AG04450 (cell line): ENCODE measurements at regions of chr2 and their contacts with region 1.

Region 1: DNA sequence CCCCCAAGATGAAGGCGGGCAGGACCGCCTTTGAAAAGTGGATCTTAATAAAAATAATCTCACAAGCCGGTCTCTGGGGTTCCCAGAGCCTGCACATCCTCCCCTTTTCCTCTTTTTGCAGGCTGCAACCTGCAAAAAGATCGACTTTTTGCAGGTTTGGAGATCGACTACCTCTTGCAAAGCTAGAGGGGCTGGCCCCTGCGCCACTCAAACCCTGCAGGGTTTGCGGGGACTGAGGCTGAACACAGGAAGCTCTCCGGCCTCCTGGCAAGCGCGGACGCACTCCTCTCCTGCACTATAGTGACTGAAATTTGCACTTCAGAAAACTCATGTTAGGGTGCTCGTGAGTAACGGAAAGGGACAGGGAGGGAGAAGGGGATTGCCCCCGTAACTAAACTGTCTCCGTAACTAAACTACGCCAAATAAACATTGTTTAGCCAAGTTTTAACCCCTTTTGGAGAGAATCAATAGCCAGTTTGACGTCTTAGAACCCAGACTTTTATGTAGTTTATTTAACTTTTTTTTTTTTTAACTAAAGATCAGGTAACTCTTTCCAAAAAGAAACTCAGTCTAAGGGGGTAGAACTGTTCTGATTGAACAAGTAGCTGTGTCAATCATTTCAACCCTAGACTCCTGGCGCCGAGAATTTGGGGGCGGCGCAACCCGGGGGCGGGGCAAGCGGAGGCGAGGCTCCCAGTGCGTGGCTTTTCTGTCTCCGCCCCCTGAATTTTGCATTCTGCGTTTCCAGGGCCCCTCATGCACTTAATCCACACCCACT is 2.5 kb downstream of the IGFBP5 start:
- DNase-seq: no peak
- H3K4me3 ChIP-seq: peak overlapping the region; percentile 93
- H3K27ac ChIP-seq: peak overlapping the region; percentile 75
- H3K27me3 ChIP-seq: no peaks in the 10 kb centered on the region
- CTCF ChIP-seq: no peak

Region 2: DNA sequence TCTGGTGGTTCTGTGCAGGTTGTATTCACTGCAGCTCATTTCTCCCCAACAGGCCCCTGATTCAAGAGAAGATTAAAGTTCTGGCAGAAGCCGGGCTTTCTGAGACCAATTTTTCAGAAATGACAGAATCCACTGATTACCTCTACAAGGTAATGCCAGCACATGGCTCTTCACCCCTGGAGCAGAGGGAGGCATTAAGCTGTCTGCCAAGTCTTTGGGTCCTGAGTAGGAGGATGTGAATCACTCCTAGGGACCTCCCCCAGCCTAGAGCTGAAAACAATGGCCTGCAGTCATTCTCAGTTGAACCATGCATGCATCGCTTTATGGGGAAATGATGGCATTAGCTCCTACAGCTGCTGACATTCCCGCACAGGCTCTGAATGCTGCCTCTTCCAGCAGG is 214.7 kb before region 1 on chr2:
- CTCF ChIA-PET with region 1: no interaction called
- POLR2A ChIA-PET with region 1: interaction called, 10 read pairs
- DNase-seq: peak; percentile 38
- H3K4me3 ChIP-seq: no peak overlapping the region
- H3K27ac ChIP-seq: no peak overlapping the region
- H3K27me3 ChIP-seq: no peaks in the 10 kb centered on the region
- CTCF ChIP-seq: no peak

Region 3: GRCh38 chr2:216525972-216526371 is 166.9 kb before region 1 on chr2:
- CTCF ChIA-PET with region 1: no interaction called
- POLR2A ChIA-PET with region 1: no interaction called
- DNase-seq: no peak
- H3K4me3 ChIP-seq: no peak overlapping the region
- H3K27ac ChIP-seq: no peak overlapping the region
- H3K27me3 ChIP-seq: no peaks in the 10 kb centered on the region
- CTCF ChIP-seq: no peak

Region 4: DNA sequence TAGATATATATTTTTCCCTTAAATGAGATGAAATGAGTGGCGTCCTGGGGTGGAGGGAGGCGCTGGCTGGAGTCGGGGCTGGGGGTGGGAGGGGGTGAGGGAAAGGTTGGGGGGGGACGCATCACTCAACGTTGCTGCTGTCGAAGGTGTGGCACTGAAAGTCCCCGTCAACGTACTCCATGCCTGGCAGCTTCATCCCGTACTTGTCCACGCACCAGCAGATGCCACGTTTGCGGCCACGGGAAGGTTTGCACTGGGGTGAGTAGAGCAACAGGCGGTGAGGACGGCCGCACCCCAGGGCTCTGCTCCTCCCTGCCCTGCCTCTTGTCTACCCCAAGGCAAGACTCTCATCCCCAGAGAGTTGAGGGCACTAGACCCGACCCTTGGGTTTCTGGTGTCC is 16.2 kb before region 1 on chr2:
- CTCF ChIA-PET with region 1: no interaction called
- POLR2A ChIA-PET with region 1: no interaction called
- DNase-seq: no peak
- H3K4me3 ChIP-seq: no peak overlapping the region
- H3K27ac ChIP-seq: peak overlapping the region; percentile 52
- H3K27me3 ChIP-seq: no peaks in the 10 kb centered on the region
- CTCF ChIP-seq: no peak

Region 5: DNA sequence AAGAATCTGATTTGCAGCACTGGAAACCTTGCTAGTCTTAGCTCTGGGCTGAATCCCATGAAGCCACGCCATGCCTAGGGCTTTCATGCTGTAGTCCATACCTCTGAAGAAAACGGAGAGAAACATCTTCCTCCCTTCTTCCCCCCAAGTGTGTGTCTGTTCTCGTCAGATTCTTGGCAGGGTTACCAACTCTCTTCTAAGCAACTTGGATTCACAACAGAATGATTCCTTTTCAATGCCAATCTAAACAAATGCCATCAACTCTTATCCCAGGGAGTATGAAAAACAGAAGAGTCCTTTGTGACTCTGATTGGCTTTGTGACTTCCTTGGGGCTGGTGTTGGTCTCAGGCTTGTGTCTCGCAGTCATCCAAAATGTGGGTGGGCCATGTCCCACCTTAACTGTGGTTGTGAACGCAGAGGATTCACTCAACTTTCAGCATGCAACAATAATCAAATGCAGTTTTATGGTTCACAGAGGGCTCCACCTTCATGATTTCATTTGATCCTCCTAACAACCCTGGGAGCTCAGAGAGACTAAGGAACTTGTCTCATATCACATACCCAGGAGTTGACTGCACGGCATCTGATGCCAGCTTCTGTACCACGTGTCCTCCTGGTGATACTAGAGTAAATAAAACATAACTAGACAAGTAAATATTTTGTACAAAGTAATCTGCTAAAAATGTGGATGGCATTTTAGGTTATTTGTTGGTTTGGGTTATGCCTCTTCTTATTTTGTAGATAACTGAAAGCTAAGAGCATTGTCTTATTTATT is 353.1 kb after region 1 on chr2:
- CTCF ChIA-PET with region 1: interaction called, 11 read pairs
- POLR2A ChIA-PET with region 1: interaction called, 15 read pairs
- DNase-seq: no peak
- H3K4me3 ChIP-seq: no peak overlapping the region
- H3K27ac ChIP-seq: no peak overlapping the region
- H3K27me3 ChIP-seq: no peaks in the 10 kb centered on the region
- CTCF ChIP-seq: no peak

Region 6: GRCh38 chr2:217223222-217223930 is 530.6 kb after region 1 on chr2:
- CTCF ChIA-PET with region 1: interaction called, 15 read pairs
- POLR2A ChIA-PET with region 1: interaction called, 15 read pairs
- DNase-seq: peak; percentile 90
- H3K4me3 ChIP-seq: no peak overlapping the region
- H3K27ac ChIP-seq: peak overlapping the region; percentile 97
- H3K27me3 ChIP-seq: no peaks in the 10 kb centered on the region
- CTCF ChIP-seq: no peak

Region 7: DNA sequence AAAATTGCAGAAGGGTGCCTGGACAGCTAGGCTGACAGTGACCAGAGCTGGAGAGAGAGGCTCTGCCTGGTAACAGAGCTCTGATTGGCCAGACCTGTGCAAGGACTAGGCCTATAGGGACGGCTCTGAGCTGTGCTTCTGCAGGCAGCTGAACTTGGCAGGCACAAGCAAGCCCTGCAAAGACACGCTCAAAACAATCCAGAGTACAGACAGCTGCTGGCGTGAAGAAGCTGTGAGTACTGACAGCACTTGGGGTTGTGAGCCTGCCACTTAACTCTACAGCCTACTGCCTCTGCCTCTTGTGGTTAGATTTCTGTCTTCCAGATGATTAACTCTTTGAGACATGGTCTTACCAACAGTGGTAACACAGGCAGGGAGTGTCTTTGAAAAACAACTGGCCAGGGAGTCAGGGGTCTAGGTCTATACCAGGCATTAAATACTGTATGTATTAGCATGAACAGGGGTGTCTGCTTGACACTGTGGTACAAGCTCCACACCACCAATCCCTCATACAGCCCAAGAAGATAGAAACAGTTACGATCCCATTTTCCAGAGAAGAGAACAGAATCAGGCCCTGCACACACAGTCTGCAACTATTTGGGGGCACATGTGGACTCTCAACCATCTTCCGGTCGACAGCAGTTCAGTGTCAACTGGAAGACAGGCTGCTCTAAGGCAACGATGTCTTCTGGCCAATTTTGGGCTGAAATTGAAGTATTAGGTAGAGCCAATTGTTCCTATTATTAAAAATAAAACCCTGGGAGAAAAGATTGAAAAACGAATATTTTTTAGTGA is 741.6 kb after region 1 on chr2:
- CTCF ChIA-PET with region 1: no interaction called
- POLR2A ChIA-PET with region 1: interaction called, 10 read pairs
- DNase-seq: peak; percentile 98
- H3K4me3 ChIP-seq: peak overlapping the region; percentile 35
- H3K27ac ChIP-seq: peak overlapping the region; percentile 60
- H3K27me3 ChIP-seq: no peaks in the 10 kb centered on the region
- CTCF ChIP-seq: no peak